ENCODE measurements at regions of chr2 and their contacts with region 1.

Region 1: GRCh38 chr2:110105608-110106467 is 9.8 kb downstream of the MALL start:
- DNase-seq: no peak
- H3K4me3 ChIP-seq: no peak overlapping the region
- H3K27ac ChIP-seq: peak overlapping the region; percentile 73
- H3K27me3 ChIP-seq: no peaks in the 10 kb centered on the region
- CTCF ChIP-seq: no peak

Region 2: GRCh38 chr2:110116033-110116710 is 10.3 kb after region 1 on chr2:
- CTCF ChIA-PET with region 1: interaction called, 24 read pairs
- POLR2A ChIA-PET with region 1: interaction called, 6 read pairs
- DNase-seq: no peak
- H3K4me3 ChIP-seq: peak overlapping the region; percentile 53
- H3K27ac ChIP-seq: no peak overlapping the region
- H3K27me3 ChIP-seq: peaks cover 2% of the 10 kb centered on the region
- CTCF ChIP-seq: peak; percentile 69

Measured in AG04450 (cell line).